ENCODE measurements at regions of chr3 and their contacts with region 1.

Region 1: GRCh38 chr3:196518966-196519717 is 4.0 kb upstream of the SMCO1 start:
- DNase-seq: peak; percentile 29 to 75
- ATAC-seq: peak; percentile 72 to 84 (median 79)
- H3K4me3 ChIP-seq: no peak overlapping the region
- H3K27ac ChIP-seq: peak overlapping the region in 2 of 10 donors; percentile 31 to 39
- H3K4me1 ChIP-seq: peaks cover 0 to 20% (median 0%) of the 10 kb centered on the region in 9 donors
- H3K27me3 ChIP-seq: no peaks in the 10 kb centered on the region
- CTCF ChIP-seq: peak; percentile 42 to 74 (median 64)

Region 2: GRCh38 chr3:195716865-195717210 is 802.3 kb before region 1 on chr3:
- intact Hi-C with region 1: no loop called
- DNase-seq: no peak
- ATAC-seq: peak in 5 of 8 donors; percentile 8 to 29 (median 12)
- H3K4me3 ChIP-seq: no peak overlapping the region
- H3K27ac ChIP-seq: no peak overlapping the region
- H3K4me1 ChIP-seq: no peaks in the 10 kb centered on the region
- H3K27me3 ChIP-seq: no peaks in the 10 kb centered on the region
- CTCF ChIP-seq: no peak

Region 3: DNA sequence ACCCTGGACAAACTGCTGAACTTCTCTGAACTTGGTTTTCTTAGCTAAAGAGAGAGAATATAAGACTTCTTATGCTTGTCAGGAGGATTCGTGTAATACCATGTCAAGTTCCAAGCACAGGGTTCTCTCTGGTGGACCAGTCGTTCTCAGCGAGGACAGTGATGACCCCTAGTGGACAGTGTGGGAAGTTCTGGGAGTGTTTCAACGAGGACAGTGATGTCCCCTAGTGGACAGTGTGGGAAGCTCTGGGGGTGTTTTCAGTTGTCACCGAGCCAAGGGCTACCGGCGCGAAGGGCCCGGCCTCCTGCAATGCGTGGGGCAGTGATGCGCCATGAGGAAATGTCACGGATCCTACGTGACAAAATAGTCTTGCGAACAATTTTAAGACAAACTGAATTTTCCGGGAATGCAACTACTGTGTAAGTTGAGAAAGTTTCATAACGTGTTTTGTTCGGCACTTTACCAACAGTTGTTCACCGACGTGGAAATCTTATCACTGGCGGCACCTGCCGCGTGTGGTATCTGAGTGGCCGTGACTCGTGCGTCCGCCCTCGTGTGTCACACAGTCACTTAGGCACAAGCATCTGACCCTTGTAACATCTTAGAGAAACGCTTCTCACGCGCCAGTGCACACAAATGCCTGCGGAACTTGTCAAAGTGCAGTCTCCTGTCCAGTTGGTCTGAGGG is 668.1 kb before region 1 on chr3:
- intact Hi-C with region 1: loop called in 1 of 10 experiments (anchors 5 kb)
- DNase-seq: peak; percentile 66 to 88
- ATAC-seq: peak; percentile 83 to 93 (median 88)
- H3K4me3 ChIP-seq: no peak overlapping the region
- H3K27ac ChIP-seq: no peak overlapping the region
- H3K4me1 ChIP-seq: peaks cover 0 to 9% (median 0%) of the 10 kb centered on the region in 9 donors
- H3K27me3 ChIP-seq: peaks cover 0 to 5% (median 0%) of the 10 kb centered on the region in 7 donors
- CTCF ChIP-seq: peak; percentile 98 to 100 (median 100)

Region 4: GRCh38 chr3:196251918-196252317 is 267.2 kb before region 1 on chr3:
- intact Hi-C with region 1: loop called (anchors 1 to 10 kb)
- DNase-seq: no peak
- ATAC-seq: peak in 2 of 8 donors; percentile 14 to 66
- H3K4me3 ChIP-seq: no peak overlapping the region
- H3K27ac ChIP-seq: no peak overlapping the region
- H3K4me1 ChIP-seq: peaks cover 0 to 4% (median 0%) of the 10 kb centered on the region in 9 donors
- H3K27me3 ChIP-seq: no peaks in the 10 kb centered on the region
- CTCF ChIP-seq: no peak

Measured in heart right ventricle (tissue), 16 donors.